ENCODE measurements at regions of chr11 and their contacts with region 1.

Region 1: GRCh38 chr11:17598700-17599459 is 51.8 kb downstream of the OTOG start:
- H3K4me3 ChIP-seq: no peak overlapping the region
- H3K27ac ChIP-seq: no peak overlapping the region
- H3K4me1 ChIP-seq: no peaks in the 10 kb centered on the region
- CTCF ChIP-seq: peak; percentile 72

Region 2: DNA sequence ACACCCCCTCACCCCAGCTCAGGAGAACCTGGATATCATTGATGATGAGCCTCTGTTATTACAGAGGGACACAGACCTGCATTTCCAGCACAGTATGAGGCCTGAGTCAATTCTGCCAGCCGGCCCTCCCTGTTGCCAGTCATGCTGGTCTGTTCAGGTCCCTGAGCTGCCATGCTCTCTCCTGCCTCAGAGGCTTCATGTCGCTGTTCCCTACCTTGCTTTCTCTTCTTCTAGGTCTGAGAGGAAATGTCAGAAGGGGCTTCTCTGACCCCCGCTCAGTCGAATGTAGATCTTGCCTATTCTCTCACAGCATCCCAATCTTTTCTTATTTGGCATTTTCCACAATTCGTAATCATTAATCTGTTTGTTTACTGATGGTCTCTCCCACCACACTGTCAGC is 100.4 kb before region 1 on chr11:
- CTCF ChIA-PET with region 1: no interaction called
- POLR2A ChIA-PET with region 1: no interaction called
- H3K4me3 ChIP-seq: no peak overlapping the region
- H3K27ac ChIP-seq: no peak overlapping the region
- H3K4me1 ChIP-seq: no peaks in the 10 kb centered on the region
- CTCF ChIP-seq: no peak

Region 3: GRCh38 chr11:17576601-17577000 is 22.3 kb before region 1 on chr11:
- CTCF ChIA-PET with region 1: no interaction called
- POLR2A ChIA-PET with region 1: no interaction called
- H3K4me3 ChIP-seq: no peak overlapping the region
- H3K27ac ChIP-seq: no peak overlapping the region
- H3K4me1 ChIP-seq: no peaks in the 10 kb centered on the region
- CTCF ChIP-seq: no peak

Region 4: GRCh38 chr11:17588166-17588565 is 10.7 kb before region 1 on chr11:
- CTCF ChIA-PET with region 1: interaction called, 10 read pairs
- POLR2A ChIA-PET with region 1: no interaction called
- H3K4me3 ChIP-seq: no peak overlapping the region
- H3K27ac ChIP-seq: no peak overlapping the region
- H3K4me1 ChIP-seq: no peaks in the 10 kb centered on the region
- CTCF ChIP-seq: no peak

Region 5: DNA sequence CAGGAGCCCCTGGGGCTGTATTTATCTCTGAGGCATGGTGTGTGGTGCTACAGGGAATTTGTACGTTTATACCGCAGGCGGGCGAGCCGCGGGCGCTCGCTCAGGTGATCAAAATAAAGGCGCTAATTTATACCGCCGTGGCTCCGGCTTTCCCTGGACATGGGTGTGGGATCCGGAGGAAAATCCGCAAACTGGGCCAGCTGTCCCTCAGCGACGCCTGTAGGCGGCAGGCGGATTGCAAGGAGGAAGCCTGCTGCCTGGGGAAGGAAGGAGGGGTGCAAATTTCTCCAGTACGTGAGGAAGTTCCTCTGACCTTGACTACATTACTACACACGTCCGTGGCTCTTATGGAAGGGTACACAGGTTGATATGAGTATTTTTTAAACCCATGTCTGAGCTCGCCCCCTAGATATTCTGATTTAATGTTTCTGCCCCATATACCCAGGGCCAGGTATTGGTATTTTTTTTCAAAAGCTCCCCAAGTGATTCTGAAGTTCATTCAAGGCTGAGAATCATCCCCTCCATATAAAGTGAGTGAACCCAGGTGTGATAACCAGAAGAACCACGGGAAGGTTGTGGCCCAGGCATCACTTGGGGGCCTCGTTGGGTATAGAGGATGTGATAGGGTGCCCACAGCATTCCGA is 123.2 kb after region 1 on chr11:
- CTCF ChIA-PET with region 1: interaction called, 13 read pairs
- POLR2A ChIA-PET with region 1: no interaction called
- H3K4me3 ChIP-seq: no peak overlapping the region
- H3K27ac ChIP-seq: no peak overlapping the region
- H3K4me1 ChIP-seq: no peaks in the 10 kb centered on the region
- CTCF ChIP-seq: peak; percentile 35; the same call in 1 of the 2 replicates